Activated T-helper 1 cell treated with anti-CD3 and anti-CD28 coated beads, Interleukin-12 subunit alpha, Interleukin-12 subunit beta, Interleukin-2, Interleukin-4 antibody, amounts not matched to agents 30 ng/mL and 10 ng/mL and 1 ng/mL, durations not matched to agents 14 hours and 24 hours and 36 hours (primary cell): ENCODE measurements at regions of chr1 and their contacts with region 1.

Region 1: GRCh38 chr1:184163674-184164465 is 112.3 kb downstream of the TSEN15 start:
- DNase-seq: peak; percentile 20
- H3K4me3 Mint-ChIP-seq: no peak overlapping the region
- H3K27ac Mint-ChIP-seq: no peak overlapping the region
- H3K4me1 Mint-ChIP-seq: peaks cover 24% of the 10 kb centered on the region
- H3K27me3 Mint-ChIP-seq: peaks cover 12% of the 10 kb centered on the region

Region 2: GRCh38 chr1:183635606-183636333 is 528.1 kb before region 1 on chr1 and contains the start of gene ARPC5:
- intact Hi-C with region 1: loop called (anchors 2 kb)
- DNase-seq: peak; percentile 96
- H3K4me3 Mint-ChIP-seq: peak within 1 kb of the TSS; percentile 100
- H3K27ac Mint-ChIP-seq: peak within 1 kb of the TSS; percentile 100
- H3K4me1 Mint-ChIP-seq: peaks cover 46% of the 10 kb centered on the region
- H3K27me3 Mint-ChIP-seq: peaks cover 4% of the 10 kb centered on the region
- total RNA-seq, gene ARPC5: 146 and 154 TPM in 2 replicates

Region 3: GRCh38 chr1:183989078-183989577 is 174.7 kb before region 1 on chr1:
- intact Hi-C with region 1: loop called (anchors 1 kb)
- DNase-seq: no peak
- H3K4me3 Mint-ChIP-seq: no peak overlapping the region
- H3K27ac Mint-ChIP-seq: peak overlapping the region; percentile 47
- H3K4me1 Mint-ChIP-seq: peaks cover 26% of the 10 kb centered on the region
- H3K27me3 Mint-ChIP-seq: peaks cover 5% of the 10 kb centered on the region

Region 4: DNA sequence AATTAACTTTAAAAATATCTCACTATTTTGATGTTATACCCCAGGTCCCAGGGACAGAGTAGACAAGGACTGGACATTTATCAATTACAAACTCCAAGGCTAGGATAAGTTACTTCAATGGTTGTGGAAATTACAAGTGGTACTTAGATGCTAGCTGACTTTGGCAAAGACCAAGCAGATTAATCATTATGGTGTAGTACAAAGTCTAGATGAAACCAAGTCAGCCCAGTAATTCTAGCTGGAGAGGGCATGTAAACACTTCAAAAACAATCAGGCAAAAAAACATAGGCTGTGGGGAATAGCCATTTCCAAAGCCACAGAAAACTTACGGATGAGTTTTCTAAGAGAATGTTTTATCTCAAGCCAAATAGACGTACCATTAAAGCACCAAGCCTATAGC is 12.2 kb after region 1 on chr1:
- intact Hi-C with region 1: no loop called
- DNase-seq: no peak
- H3K4me3 Mint-ChIP-seq: no peak overlapping the region
- H3K27ac Mint-ChIP-seq: no peak overlapping the region
- H3K4me1 Mint-ChIP-seq: no peaks in the 10 kb centered on the region
- H3K27me3 Mint-ChIP-seq: peaks cover 7% of the 10 kb centered on the region

Region 5: GRCh38 chr1:184222652-184223052 is 58.8 kb after region 1 on chr1:
- intact Hi-C with region 1: loop called (anchors 2 kb)
- DNase-seq: peak; percentile 22
- H3K4me3 Mint-ChIP-seq: no peak overlapping the region
- H3K27ac Mint-ChIP-seq: no peak overlapping the region
- H3K4me1 Mint-ChIP-seq: peaks cover 7% of the 10 kb centered on the region
- H3K27me3 Mint-ChIP-seq: peaks cover 6% of the 10 kb centered on the region

Region 6: DNA sequence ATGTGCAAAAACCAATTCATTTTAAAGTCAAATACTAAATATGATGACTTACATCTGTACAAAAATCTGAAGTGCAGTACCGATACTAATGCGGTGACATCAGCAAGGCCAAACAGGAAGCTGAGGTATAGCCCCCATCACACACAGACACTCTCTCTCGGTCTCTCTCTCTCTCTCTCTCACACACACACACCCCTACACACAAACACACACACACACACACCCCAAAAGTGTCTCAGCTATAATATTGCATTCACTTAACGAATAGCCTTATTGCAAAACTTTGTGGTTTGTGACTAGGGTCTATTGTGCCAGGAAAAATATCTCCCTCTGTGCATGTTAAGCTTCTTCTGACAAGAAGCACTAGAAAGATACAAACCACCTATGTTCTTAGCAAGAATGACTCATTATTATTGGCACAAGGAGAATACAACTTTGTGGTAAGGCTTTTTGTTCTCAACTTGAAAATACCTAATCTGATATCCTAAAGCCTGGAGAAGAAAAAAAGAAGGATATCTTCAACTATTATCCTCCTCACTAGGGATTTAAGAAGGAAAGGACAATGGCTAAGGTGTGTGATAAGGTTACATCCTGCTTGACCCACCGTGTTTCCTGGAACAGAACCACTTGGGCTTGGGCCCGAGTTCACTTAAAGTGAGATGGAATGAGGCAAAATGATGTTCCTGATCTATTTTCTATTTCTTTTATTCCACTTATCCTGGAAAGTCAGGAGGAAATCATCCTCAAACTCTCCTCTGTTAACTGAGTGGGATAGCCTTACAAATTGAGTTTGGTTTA is 703.3 kb after region 1 on chr1:
- intact Hi-C with region 1: loop called (anchors 2 kb)
- DNase-seq: peak; percentile 44
- H3K4me3 Mint-ChIP-seq: peak overlapping the region; percentile 38
- H3K27ac Mint-ChIP-seq: peak overlapping the region; percentile 90
- H3K4me1 Mint-ChIP-seq: peaks cover 40% of the 10 kb centered on the region
- H3K27me3 Mint-ChIP-seq: no peaks in the 10 kb centered on the region

Region 7: DNA sequence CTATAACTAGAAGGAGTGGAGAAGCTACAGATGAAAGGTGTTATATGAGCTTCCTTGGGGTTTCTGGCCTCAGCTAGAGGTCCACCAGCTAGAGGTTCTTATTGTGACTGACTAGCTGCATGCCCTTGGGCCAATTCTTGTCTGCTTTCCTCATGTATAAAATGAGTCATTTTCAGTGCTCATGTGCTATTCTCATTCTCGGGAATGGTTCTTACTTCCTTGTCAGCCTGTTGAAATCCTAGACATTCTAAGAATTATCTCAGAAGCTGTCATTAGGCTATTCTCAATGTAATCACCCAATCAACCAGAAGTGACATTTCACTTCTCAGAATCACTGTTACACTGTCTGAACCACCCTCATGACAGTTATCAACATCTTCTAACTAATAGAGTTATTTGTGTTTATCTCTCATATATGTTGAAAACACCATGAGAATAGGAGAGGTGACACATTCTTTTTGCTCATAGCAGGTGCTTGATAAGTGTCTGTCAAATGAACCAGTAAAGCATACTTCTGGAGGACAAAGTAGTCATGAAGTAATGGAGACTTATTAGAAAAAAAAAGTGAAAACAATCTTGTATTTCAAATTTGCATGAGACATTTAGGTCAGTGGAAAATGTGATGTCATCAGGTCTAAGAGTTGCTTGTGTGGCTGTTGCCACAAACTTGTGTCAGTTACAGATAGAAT is 1276.0 kb after region 1 on chr1:
- intact Hi-C with region 1: loop called (anchors 2 kb)
- DNase-seq: peak; percentile 44
- H3K4me3 Mint-ChIP-seq: no peak overlapping the region
- H3K27ac Mint-ChIP-seq: no peak overlapping the region
- H3K4me1 Mint-ChIP-seq: peaks cover 27% of the 10 kb centered on the region
- H3K27me3 Mint-ChIP-seq: no peaks in the 10 kb centered on the region